Activated naive CD4-positive, alpha-beta T cell treated with anti-CD3 and anti-CD28 coated beads for 36 hours (primary cell): ENCODE measurements at regions of chr1 and their contacts with region 1.

Region 1: DNA sequence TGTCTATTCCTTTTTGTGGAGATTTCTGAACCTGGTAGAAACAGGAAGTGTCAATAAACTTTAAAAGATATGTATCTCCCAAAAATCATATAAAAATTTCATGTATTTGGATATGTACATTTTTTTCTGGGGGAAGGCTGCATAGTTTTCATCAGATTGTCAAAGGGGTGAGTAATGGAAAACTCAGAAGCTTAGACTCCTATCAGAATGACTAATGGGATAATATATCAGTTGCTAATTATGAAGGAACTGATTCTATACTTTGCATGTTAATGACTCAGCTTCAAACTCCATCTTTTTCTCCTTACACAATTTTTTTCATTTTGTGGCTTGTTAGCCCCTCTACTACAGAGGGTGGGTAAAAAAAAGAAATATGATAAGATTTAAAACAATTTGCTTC is 55.9 kb downstream of the GON4L start:
- DNase-seq: no peak
- H3K4me3 Mint-ChIP-seq: no peak overlapping the region
- H3K27ac Mint-ChIP-seq: peak overlapping the region; percentile 62
- H3K4me1 Mint-ChIP-seq: peaks cover 4% of the 10 kb centered on the region
- H3K27me3 Mint-ChIP-seq: no peaks in the 10 kb centered on the region

Region 2: DNA sequence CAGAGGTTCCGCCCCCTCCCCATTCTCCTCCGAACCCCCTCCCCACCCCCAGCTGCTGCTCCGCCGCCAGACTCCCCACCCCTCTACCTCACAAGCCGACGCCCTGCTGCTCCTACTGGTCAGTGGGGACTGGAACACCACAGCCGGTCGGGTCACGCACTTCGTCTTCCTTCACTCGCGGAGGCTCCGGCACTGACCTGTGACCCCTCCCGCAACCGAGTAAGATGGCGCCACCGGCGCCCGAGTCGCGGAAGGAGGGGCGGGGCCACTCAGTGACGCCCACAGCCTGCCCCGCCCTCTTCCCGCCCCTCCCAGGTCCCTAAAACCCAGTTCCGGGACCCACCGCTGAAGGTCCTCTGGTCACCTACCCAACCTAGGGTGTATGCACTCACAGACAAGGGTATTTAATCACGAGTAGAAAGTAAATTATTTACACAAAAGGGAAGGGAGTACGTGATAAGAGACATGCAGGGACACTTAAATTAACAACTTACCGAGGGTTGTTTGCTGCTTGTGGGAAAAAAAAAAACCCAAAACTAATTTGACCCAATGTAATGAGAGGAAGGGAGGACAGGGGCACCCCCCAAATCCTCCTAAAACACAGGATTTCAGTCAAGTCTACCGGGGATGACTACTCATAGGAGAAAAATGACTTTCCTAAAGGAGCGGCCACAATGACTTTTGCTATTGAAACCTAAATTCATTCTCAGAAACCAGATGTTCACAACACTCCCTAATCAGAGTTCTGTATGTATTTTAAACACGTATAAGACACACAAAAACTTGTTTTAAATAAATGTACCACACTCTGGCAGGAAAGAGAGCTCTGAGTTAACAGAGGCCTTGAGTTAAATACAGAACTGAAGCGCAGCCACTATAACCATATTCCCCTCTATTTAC is 110.3 kb after region 1 on chr1 and contains the start of gene RIT1:
- CTCF ChIA-PET with region 1: no interaction called
- intact Hi-C with region 1: loop called (anchors 5 kb)
- DNase-seq: peak; percentile 89
- H3K4me3 Mint-ChIP-seq: peak within 1 kb of the TSS; percentile 99
- H3K27ac Mint-ChIP-seq: peak within 1 kb of the TSS; percentile 97
- H3K4me1 Mint-ChIP-seq: peaks cover 21% of the 10 kb centered on the region
- H3K27me3 Mint-ChIP-seq: no peaks in the 10 kb centered on the region
- total RNA-seq, gene RIT1: 17.1 to 21.3 TPM

Region 3: GRCh38 chr1:156054500-156055280 is 253.5 kb after region 1 on chr1 and contains the start of gene LAMTOR2:
- CTCF ChIA-PET with region 1: no interaction called
- intact Hi-C with region 1: no loop called
- DNase-seq: peak; percentile 98
- H3K4me3 Mint-ChIP-seq: peak within 1 kb of the TSS; percentile 92
- H3K27ac Mint-ChIP-seq: peak within 1 kb of the TSS; percentile 93
- H3K4me1 Mint-ChIP-seq: peaks cover 24% of the 10 kb centered on the region
- H3K27me3 Mint-ChIP-seq: no peaks in the 10 kb centered on the region
- total RNA-seq, gene LAMTOR2: 54.9 to 55.9 TPM